Motor neuron (in vitro differentiated cells): ENCODE measurements at regions of chr21 and their contacts with region 1.

Region 1: GRCh38 chr21:31117128-31117916 is 79.0 kb upstream of the KRTAP19-8 start:
- ATAC-seq: peak in 5 of 8 experiments; percentile 3 to 98 (median 97)
- H3K4me3 ChIP-seq: no peak overlapping the region
- H3K27ac ChIP-seq: no peak overlapping the region
- H3K4me1 ChIP-seq: no peaks in the 10 kb centered on the region

Region 2: DNA sequence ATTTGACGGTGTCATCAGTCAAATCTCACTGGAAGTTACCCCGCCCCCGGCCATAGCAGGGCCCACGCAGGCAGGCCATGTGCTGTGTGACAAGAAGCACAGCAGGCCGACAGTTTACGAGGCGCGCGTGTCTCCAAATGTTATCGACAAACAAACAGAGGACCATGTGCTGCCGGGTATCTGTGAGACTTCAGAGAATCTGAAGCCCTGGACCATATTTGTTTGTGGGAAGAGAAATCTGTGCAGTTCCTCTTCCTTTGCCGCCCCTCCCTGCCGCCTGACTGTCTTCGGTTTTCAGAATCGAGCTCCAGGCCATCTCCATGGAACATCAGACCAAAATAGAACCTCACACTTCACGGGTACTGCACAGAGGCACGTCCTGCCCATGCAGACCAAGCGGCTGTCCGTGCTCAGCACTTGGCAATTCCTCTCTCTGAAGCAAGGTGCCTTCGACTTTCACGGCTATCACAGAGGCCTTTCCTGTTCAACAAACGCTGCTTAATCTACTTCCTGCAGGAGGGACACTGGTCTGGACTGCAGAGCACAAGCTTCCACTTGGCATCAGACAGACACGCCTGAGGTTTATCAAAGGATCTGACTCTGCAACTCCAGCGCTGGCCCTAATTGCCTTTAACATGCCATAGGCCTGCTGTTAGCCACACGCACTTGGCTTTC is 56.7 kb after region 1 on chr21:
- in situ Hi-C with region 1: loop called in 1 of 9 experiments (anchors 10 kb)
- ATAC-seq: peak in 1 of 8 experiments; percentile 50
- H3K4me3 ChIP-seq: no peak overlapping the region
- H3K27ac ChIP-seq: no peak overlapping the region
- H3K4me1 ChIP-seq: peaks cover 3 to 5% of the 10 kb centered on the region in 2 donors

Region 3: DNA sequence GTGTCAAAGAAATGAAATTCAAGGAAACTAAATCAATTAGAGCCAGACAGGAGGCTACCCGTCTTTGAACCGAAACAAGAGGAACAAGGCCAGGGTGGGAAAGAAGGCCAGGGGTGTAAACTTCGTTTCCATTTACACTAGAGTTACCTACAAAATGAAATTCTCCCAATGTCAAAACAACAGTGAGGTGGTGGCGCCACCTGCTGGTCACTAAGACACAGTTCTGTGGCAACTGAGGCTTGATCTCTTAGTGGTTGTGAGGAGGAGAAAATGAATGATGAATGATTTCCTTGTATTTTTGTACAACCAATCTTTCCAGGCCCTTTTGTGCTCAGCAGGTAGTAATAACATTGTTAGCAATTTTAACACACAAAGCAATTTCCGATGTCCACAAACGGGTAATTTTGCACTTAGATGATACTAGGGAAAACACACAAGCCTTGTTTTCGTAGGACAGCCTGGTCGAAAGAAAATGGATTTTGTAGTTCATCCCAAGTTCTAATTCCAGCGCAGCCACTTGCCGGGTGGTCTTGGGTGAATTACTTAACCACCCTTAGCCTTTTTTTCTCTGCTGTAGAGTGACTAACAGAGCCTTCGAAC is 487.4 kb after region 1 on chr21:
- in situ Hi-C with region 1: loop called in 2 of 9 experiments (anchors 10 to 25 kb)
- ATAC-seq: peak; percentile 57 to 88 (median 71)
- H3K4me3 ChIP-seq: no peak overlapping the region
- H3K27ac ChIP-seq: no peak overlapping the region
- H3K4me1 ChIP-seq: peaks cover 9 to 12% of the 10 kb centered on the region in 2 donors